ENCODE measurements at regions of chr11 and their contacts with region 1.

Region 1: DNA sequence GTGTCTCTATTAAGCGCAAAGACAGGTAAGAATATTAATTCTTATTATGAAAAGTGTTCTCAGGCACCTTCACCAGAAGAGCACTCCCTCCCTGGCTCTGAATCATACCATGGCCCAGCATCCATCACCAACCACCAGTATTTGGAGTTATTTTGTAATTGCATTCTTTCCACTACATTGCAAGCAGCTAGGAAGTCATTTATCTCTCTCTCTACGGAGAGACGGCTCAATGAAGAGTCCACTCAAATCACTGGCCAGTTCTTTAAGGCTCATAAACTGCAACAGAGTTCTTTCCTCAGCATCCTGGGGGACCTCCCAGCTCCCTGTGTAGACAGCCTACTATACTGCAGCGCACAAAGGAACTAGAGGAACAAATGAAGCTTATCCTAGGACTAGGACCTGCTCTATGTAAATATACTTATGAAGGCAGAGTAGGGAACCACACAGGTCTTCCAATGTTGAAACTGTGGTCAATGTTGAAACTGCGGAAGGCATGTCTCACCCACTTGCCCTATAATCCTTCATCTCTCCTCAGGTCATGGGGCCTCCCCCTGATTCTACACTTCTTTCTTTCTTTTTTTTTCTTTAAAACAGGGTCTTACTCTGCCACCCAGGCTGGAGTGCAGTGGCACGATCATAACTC is 63.4 kb downstream of the AAMDC start:
- DNase-seq: no peak
- H3K4me3 ChIP-seq: no peak overlapping the region
- H3K27ac ChIP-seq: no peak overlapping the region
- H3K4me1 ChIP-seq: no peaks in the 10 kb centered on the region
- H3K27me3 ChIP-seq: no peaks in the 10 kb centered on the region
- CTCF ChIP-seq: no peak

Region 2: DNA sequence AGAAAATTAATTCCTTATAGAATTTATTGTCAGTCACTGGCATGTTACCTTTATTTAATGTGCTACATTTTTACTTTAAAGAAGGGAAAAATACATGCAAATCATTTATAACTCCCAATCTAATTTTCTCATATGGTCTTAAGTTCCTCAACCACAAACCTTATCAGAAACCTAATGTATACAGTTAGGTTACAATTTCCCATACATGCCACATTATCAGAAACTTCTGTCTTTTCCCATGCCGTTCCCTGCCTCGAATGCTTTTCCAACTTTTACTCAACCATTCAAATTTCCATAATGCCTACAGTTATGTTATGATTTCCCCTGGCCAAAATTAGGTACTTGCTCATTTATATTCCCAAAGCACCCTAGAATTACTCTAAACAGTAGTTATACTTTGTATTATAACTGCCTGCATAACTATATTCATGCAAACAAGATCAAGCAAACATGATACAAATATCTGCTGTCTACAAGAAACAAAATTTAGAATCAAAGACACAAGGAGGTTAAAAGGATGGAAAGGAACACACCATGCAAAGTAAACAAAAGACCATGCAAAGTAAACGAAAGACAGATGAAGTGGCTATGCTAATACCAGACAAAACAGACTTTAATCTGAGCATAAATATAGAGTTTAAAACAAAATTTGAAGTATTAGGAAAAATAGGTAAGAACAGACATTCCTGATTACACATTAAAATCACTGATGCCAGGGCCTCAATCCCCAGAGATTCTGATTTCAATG is 77.1 kb before region 1 on chr11:
- CTCF ChIA-PET with region 1: no interaction called
- dilution Hi-C with region 1: loop called (anchors 5 kb)
- in situ Hi-C with region 1: no loop called
- intact Hi-C with region 1: no loop called
- DNase-seq: no peak
- H3K4me3 ChIP-seq: no peak overlapping the region
- H3K27ac ChIP-seq: no peak overlapping the region
- H3K4me1 ChIP-seq: peaks cover 4% of the 10 kb centered on the region
- H3K27me3 ChIP-seq: no peaks in the 10 kb centered on the region
- CTCF ChIP-seq: no peak

Region 3: GRCh38 chr11:77994412-77995362 is 110.4 kb after region 1 on chr11 and contains the start of gene INTS4:
- CTCF ChIA-PET with region 1: no interaction called
- dilution Hi-C with region 1: loop called (anchors 5 kb)
- in situ Hi-C with region 1: no loop called
- intact Hi-C with region 1: no loop called
- DNase-seq: peak; percentile 100
- H3K4me3 ChIP-seq: peak within 1 kb of the TSS; percentile 66 to 87 (median 85)
- H3K27ac ChIP-seq: peak within 1 kb of the TSS; percentile 46
- H3K4me1 ChIP-seq: peaks cover 14% of the 10 kb centered on the region
- H3K27me3 ChIP-seq: no peaks in the 10 kb centered on the region
- CTCF ChIP-seq: no peak
- total RNA-seq, gene INTS4: 25.0 to 28.0 TPM